ENCODE measurements at regions of chr19 and their contacts with region 1.

Region 1: DNA sequence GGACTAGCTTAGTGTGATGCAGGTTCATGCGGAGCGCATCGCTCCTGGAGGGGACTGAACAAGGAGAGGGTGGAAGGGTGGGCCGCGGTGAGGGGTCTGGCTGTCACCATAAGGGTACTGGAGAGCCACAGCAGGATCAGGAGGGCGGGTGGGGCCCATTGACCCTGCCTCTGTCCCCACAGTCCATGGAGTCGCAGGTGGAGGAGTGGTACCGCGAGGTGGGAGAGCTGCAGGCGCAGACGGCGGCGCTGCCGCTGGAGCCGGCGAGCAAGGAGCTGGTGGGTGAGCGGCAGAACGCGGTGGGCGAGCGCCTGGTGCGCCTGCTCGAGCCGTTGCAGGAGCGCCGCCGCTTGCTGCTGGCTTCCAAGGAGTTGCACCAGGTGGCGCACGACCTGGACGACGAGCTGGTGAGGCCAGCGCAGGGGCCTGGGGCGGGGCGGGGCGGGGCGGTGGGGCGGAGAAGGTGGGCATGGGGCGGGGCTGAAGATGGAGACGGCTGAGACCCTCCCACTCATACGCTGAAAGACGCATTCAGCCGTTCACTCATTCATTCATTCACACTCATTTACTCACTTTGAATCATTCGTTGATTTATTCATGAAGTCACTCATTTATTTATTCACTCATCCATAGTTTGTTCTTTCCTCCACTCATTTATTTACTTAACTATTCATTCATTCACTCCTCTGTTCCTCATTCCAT is 27.5 kb upstream of the SHKBP1 start:
- DNase-seq: peak in 3 of 4 donors; percentile 45 to 90 (median 46)
- ATAC-seq: peak; percentile 85
- H3K4me3 ChIP-seq: no peak overlapping the region
- H3K27ac ChIP-seq: no peak overlapping the region
- H3K4me1 ChIP-seq: peaks cover 0 to 7% of the 10 kb centered on the region in 2 donors
- H3K27me3 ChIP-seq: peaks cover 17 to 69% of the 10 kb centered on the region in 2 donors
- CTCF ChIP-seq: peak; percentile 12 to 37

Region 2: DNA sequence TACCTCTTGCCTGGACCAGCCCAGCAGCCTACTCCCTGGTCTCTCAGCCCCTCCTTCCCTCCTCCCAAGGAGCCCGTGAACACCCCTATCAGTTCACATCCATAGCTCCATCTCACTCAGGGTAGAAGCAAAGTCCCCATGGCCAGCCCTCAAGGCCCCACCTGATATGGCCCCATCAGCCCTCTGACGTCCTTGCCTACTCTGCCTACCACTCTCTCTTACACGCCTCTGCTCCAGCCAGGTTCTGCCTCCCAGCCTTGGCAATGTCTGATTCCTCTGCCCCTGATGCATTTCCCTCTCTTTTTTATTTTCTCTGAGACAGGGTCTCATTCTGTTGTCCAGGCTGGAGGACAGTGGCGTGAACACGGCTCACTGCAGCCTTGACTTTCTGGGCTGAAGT is 97.1 kb before region 1 on chr19:
- intact Hi-C with region 1: no loop called
- DNase-seq: no peak
- ATAC-seq: no peak
- H3K4me3 ChIP-seq: no peak overlapping the region
- H3K27ac ChIP-seq: no peak overlapping the region
- H3K4me1 ChIP-seq: no peaks in the 10 kb centered on the region
- H3K27me3 ChIP-seq: no peaks in the 10 kb centered on the region
- CTCF ChIP-seq: no peak

Region 3: DNA sequence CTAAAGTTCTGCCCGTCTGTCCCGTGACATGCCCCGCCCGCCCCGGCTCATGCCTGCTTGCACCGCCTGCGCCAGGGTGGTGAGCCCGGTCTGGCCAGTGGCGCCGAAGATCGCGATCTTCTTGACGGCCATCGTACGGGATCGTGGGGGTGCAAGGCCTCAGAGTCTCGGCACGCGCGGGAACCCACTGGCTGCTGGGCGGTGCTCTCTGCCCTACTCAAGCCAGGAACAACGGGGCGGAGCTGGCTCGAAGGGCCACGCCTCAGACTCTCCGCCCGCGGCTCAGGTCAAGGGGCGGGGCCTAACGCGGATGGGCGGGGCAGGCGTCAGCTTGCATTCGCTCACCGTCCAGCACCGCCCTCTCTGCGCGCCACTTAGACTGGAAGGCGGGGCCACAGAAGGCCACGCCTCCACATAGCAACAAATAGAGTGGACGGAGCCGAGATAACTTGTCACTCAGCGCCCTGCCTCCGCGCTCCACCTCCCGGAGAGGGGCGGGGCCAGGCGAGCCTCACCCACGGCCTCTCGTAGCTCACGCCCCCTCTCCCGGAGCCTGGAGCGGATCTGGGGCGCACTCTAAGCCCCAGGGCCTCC is 83.5 kb before region 1 on chr19 and contains the start of gene BLVRB:
- intact Hi-C with region 1: no loop called
- DNase-seq: peak; percentile 99 to 100 (median 100)
- ATAC-seq: peak; percentile 89
- H3K4me3 ChIP-seq: peak within 1 kb of the TSS; percentile 57 to 75
- H3K27ac ChIP-seq: peak within 1 kb of the TSS; percentile 86 to 93
- H3K4me1 ChIP-seq: peaks cover 12 to 58% of the 10 kb centered on the region in 2 donors
- H3K27me3 ChIP-seq: peaks cover 0 to 37% of the 10 kb centered on the region in 2 donors
- CTCF ChIP-seq: no peak
- polyA plus RNA-seq, gene BLVRB: 45.1 to 65.1 (median 56.8) TPM

Region 4: DNA sequence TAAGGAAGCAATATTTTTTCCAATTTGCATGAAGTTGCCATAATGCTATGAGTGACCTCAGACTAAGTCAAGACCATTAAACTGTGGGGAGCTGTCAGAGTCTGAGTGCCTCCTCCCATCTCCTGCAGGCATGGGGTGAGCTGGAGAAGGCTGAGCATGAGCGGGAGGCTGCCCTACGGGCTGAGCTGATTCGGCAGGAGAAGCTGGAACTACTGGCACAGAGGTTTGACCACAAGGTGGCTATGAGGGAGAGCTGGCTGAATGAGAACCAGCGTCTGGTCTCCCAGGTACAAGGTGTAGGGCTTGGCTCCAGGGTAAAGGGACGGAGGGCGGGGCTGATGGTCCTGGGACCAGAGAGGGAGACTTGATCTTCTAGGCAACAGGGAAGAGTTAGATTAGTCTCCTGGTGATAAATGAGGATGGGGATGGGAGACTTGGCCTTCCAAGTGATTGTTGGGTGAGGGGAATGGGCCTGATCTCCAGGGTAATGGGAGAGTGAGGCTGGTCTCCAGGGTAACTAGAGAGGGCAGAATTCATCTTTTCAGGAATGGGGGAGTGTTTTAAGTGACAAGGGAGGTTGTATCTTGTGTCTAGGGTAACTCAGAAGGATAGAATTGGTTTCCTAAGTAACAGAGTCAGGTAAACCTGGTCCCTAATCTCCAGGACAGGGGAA is 46.4 kb before region 1 on chr19:
- intact Hi-C with region 1: no loop called
- DNase-seq: no peak
- ATAC-seq: no peak
- H3K4me3 ChIP-seq: no peak overlapping the region
- H3K27ac ChIP-seq: no peak overlapping the region
- H3K4me1 ChIP-seq: no peaks in the 10 kb centered on the region
- H3K27me3 ChIP-seq: peaks cover 0 to 15% of the 10 kb centered on the region in 2 donors
- CTCF ChIP-seq: no peak

Region 5: GRCh38 chr19:40633207-40633606 is 84.0 kb after region 1 on chr19:
- intact Hi-C with region 1: loop called in 1 of 2 experiments (anchors 10 kb)
- DNase-seq: no peak
- ATAC-seq: no peak
- H3K4me3 ChIP-seq: no peak overlapping the region
- H3K27ac ChIP-seq: no peak overlapping the region
- H3K4me1 ChIP-seq: no peaks in the 10 kb centered on the region
- H3K27me3 ChIP-seq: peaks cover 0 to 19% of the 10 kb centered on the region in 2 donors
- CTCF ChIP-seq: no peak